Activated CD4-positive, alpha-beta T cell treated with anti-CD3 and anti-CD28 coated beads, Interleukin-2, amount 10 ng/mL, durations not matched to agents 24 days and 14 days (primary cell): ENCODE measurements at regions of chr13 and their contacts with region 1.

Region 1: DNA sequence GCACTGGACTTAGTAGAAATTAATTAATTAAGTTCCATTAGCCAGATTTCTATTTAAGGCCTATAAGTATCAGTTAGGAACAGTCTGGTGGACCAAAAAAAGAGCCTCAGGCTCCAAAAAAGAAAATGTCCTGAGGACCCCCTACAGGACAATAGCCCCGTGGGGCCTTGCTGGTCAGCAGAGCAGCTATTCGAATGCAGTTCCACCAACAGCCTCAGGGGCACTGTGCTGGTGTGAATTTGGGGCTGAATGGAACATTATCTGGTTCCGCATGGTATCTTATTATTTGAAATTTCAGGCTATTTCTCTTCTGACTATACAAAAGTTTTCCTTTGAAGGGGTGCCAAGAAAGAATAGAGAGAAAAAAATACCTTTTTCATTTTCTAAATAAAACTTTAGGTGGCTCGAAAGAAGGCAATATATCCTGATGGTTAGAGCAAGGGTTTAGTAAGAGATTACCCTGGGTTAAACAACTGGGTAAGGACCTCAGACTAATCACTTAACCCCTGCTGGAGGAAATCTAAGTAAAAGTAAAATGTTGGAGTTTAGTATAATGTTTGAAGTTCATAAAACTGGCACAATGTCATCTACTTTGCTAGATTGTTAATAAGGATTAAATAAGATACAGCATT is 147.2 kb downstream of the MIPEP start:
- DNase-seq: no peak
- H3K4me3 Mint-ChIP-seq: no peak overlapping the region
- H3K27ac Mint-ChIP-seq: no peak overlapping the region
- H3K4me1 Mint-ChIP-seq: peaks cover 19% of the 10 kb centered on the region
- H3K27me3 Mint-ChIP-seq: peaks cover 26% of the 10 kb centered on the region

Region 2: DNA sequence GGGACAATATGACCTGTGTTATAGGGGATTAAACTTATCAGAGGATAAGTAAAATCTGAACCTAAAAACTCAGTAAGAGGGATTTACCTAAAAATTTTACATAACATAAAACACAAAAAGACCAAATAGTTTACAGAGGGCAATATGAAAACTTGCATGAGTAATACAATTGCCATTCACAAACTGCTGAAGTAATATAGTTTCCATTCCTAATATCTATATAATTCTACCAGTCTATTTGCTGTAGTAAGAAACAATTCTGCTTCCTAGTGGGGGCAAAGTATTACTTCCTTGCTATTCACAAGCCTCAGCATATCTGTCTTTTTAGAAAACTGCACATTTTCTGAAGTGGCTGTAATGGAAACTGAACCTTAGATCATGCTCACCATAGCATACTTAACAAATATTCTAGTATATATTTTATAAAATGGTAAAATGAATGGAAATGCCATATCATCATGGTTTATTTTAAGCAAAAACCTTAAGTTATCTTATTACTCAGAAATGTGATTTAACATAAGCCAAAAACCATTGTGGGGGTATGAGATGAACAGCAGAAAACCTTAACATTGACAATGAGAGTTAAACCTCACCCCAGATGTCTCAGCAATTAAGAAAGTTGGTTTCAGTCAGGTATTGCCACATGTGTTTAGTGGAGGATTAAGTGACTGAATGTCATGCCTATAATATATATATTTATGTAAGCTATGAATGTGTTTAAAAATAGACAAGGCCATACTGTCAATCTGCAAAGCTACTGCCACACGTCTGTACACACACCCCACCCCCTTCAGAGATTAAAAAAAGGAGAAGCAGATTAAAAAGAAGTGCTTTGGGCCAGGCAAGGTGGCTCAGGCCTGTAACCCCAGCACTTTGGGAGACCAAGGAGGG is 10.4 kb after region 1 on chr13:
- intact Hi-C with region 1: loop called (anchors 1 kb)
- DNase-seq: no peak
- H3K4me3 Mint-ChIP-seq: no peak overlapping the region
- H3K27ac Mint-ChIP-seq: peak overlapping the region; percentile 46
- H3K4me1 Mint-ChIP-seq: peaks cover 30% of the 10 kb centered on the region
- H3K27me3 Mint-ChIP-seq: peaks cover 2% of the 10 kb centered on the region